ENCODE measurements at regions of chr7 and their contacts with region 1.

Region 1: DNA sequence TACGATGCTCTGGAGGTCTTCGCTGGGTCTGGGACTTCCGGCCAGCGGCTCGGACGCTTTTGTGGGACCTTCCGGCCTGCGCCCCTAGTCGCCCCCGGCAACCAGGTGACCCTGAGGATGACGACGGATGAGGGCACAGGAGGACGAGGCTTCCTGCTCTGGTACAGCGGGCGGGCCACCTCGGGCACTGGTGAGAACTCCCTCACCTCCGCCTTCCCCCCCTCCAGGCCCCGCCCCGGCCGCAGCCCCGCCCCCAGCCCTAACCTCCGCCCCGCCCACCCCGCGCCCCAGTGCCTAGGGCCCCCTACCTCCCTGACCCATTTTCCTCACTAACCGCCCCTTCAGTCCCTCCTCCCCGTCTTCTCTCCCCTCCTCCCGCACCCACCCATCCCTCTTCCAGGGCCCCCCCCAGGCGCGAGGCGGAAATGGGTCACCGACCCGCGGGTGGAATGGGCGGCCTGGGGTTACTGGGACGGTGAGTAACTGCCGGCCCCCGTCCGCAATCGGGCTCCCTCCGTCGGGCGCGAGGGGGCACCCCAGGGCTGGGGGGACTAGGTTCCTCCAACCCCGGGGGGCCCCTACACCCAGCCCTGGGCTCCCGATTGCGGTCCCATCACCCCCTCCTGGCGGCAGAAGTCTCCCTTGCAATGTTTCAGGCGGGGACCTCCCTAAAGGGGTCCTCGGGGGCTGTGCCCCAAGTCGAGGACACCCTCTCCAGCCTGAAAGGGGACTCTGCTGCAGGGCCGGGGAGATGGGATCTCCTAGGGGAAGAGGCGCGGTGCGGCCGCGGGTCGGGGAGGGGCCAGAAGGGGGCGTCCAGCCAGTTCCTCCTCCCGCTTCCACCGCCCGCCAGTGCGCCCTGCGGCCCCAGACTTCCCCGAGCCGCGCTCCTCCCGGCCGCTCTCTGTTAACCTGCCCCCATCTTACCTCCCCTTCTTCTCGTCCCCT is 2.1 kb downstream of the PCOLCE start:
- DNase-seq: peak; percentile 94

Region 2: GRCh38 chr7:100509231-100509630 is 95.1 kb before region 1 on chr7:
- intact Hi-C with region 1: no loop called
- DNase-seq: no peak

Region 3: DNA sequence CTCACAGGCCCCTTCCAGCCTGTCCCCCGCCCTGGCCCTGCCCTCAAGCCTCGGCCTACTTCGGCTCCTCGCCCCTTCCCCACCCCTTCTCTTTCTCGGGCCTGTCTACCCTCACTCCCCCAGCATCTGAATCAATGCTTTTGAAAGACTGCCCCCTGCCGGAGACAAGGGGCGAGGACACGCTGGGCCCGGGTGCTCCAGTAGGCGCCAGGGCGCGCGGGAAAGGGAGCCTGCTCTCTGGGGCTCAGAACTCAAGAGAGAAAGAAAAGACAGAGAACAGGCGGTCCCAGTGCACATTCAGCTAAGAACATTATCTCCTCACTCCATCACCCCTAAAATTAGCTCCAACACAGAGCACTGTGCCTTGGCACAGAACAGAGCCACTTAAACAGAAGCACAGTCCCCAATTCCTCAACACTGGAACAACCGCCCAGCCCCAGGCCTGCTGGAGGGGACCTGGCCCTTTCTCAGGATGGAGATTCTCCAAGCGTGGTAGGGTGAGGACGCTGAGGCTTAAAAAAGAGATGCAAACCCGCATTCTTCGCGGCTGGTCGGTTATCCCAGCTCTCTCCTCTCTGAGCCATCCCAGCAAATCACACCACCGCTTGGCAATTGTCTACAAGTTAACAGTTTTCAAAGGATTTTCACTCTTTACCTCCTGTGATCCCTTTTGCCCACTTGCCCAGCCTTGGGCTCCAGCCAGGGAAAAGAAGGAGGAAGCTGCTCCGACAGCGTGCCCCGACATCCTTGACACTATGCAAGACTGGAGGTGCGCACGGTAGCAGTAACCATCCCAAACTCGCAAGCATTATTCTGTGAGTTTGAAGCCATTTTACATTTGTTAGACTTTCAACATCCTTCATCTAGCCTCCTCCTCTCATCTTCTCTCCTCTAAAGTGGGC is 87.6 kb after region 1 on chr7:
- intact Hi-C with region 1: loop called in 1 of 2 experiments (anchors 5 kb)
- DNase-seq: peak; percentile 94